CD8-positive, alpha-beta T cell (primary cell): ENCODE measurements at regions of chr12 and their contacts with region 1.

Region 1: GRCh38 chr12:47651368-47652254 is 54.2 kb downstream of the RPAP3 start:
- DNase-seq: peak in 7 of 9 experiments; percentile 29 to 73 (median 42)
- ATAC-seq: peak; percentile 96
- H3K4me3 ChIP-seq: no peak overlapping the region
- H3K4me3 Mint-ChIP-seq: peak overlapping the region; percentile 64
- H3K27ac ChIP-seq: no peak overlapping the region
- H3K27ac Mint-ChIP-seq: peak overlapping the region; percentile 19
- H3K4me1 ChIP-seq: peaks cover 9% of the 10 kb centered on the region
- H3K4me1 Mint-ChIP-seq: peaks cover 16% of the 10 kb centered on the region
- H3K27me3 ChIP-seq: no peaks in the 10 kb centered on the region
- H3K27me3 Mint-ChIP-seq: no peaks in the 10 kb centered on the region
- CTCF ChIP-seq: peak; percentile 90

Region 2: DNA sequence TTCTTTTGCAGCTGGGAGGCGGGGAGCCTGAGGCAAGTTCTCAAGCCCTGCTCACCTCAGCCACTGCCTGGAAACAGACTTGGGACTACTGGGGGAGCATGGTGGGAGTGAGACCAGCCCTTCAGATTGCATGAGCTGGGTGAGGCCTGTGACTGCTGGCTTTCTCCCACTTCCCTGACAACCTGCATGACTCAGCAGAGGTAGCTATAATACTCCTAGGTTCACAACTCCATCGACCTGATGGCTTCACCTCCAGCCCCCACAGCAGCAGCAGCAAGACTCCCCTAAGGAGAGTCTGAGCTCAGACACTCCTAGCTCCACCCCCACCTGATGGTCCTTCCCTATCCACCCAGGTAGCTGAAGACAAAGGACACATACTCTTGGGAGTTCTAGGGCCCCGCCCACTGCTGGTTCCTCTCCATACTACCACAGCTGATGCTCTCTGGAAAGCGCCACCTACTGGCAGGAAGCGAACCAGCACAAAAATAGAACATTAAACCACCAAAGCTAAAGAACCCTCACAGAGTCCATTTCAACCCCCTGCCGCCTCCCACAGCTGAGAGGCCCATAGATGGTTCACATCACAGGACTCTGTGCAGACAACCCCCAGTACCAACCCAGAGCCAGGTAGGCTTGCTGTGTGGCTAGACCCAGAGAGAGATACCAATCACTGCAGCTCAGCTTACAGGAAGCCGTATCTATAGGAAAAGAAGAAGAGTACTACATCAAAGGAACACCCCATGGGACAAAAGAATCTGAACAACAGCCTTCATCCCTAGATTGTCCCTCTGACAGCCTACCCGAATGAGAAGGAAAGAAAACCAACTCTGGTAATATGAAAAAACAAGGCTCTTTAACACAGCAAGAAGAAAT is 14.5 kb before region 1 on chr12:
- CTCF ChIA-PET with region 1: interaction called, 12 read pairs
- POLR2A ChIA-PET with region 1: no interaction called
- intact Hi-C with region 1: no loop called
- DNase-seq: peak in 6 of 9 experiments; percentile 13 to 54 (median 34)
- ATAC-seq: no peak
- H3K4me3 ChIP-seq: no peak overlapping the region
- H3K4me3 Mint-ChIP-seq: no peak overlapping the region
- H3K27ac ChIP-seq: no peak overlapping the region
- H3K27ac Mint-ChIP-seq: no peak overlapping the region
- H3K4me1 ChIP-seq: no peaks in the 10 kb centered on the region
- H3K4me1 Mint-ChIP-seq: no peaks in the 10 kb centered on the region
- H3K27me3 ChIP-seq: no peaks in the 10 kb centered on the region
- H3K27me3 Mint-ChIP-seq: no peaks in the 10 kb centered on the region
- CTCF ChIP-seq: no peak

Region 3: DNA sequence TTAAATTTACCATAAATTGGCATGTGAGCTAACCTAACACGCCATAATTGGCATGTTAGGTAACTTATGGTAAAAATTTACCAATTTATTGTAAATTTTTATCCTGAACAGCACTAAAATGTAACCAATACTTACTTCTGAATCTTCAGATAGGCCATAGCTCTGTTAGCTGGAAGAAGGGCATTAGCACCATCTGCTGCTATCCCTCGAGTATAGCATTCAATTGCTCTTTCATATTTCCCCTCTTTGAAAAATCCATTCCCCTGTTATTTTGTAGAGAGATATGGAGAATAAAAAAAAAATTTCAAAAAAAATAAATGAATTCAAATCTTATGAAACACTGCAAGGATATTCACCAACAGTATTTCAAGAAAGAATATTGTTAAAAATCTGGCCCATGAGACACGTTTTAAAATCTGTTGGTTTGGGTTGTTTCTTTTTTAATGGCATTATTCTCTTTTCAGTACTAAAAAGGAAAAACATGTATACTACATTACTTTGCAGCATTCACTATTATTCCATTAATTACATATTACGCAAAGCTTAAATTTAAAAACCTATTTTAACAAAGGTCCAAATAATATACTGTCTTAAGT is 35.1 kb after region 1 on chr12:
- CTCF ChIA-PET with region 1: interaction called, 3 read pairs
- POLR2A ChIA-PET with region 1: no interaction called
- intact Hi-C with region 1: loop called (anchors 1 to 5 kb)
- DNase-seq: peak in 3 of 9 experiments; percentile 21 to 61 (median 42)
- ATAC-seq: peak; percentile 66
- H3K4me3 ChIP-seq: no peak overlapping the region
- H3K4me3 Mint-ChIP-seq: no peak overlapping the region
- H3K27ac ChIP-seq: no peak overlapping the region
- H3K27ac Mint-ChIP-seq: no peak overlapping the region
- H3K4me1 ChIP-seq: no peaks in the 10 kb centered on the region
- H3K4me1 Mint-ChIP-seq: peaks cover 16% of the 10 kb centered on the region
- H3K27me3 ChIP-seq: no peaks in the 10 kb centered on the region
- H3K27me3 Mint-ChIP-seq: no peaks in the 10 kb centered on the region
- CTCF ChIP-seq: peak; percentile 76

Region 4: DNA sequence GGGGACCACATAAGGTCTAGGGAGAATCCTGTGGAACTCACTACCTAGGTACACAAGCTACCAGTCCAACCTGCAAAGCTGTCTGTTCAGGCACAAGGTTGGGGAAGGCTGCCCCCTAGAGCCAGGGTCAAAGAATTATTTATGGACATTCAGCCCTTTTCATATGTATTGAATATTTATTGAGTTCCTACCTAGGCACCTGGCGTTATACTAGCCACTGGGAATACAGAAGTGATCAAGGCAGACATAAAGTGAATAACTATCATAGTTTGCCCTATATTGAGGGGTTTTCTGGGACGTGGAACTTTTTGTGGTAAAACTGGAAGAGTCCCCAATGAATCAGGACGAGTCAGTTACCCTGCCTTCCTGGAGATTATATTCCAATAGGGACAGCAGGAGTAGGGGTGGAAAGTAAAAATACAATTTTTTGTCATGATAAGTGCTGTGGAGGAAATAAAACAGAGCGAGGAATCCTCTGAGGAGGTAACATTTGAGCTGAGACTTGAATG is 115.7 kb after region 1 on chr12:
- CTCF ChIA-PET with region 1: interaction called, 4 read pairs
- POLR2A ChIA-PET with region 1: no interaction called
- intact Hi-C with region 1: loop called in 1 of 2 experiments (anchors 5 kb)
- DNase-seq: peak; percentile 46 to 83 (median 73)
- ATAC-seq: peak; percentile 76
- H3K4me3 ChIP-seq: no peak overlapping the region
- H3K4me3 Mint-ChIP-seq: no peak overlapping the region
- H3K27ac ChIP-seq: no peak overlapping the region
- H3K27ac Mint-ChIP-seq: no peak overlapping the region
- H3K4me1 ChIP-seq: peaks cover 28% of the 10 kb centered on the region
- H3K4me1 Mint-ChIP-seq: peaks cover 23% of the 10 kb centered on the region
- H3K27me3 ChIP-seq: no peaks in the 10 kb centered on the region
- H3K27me3 Mint-ChIP-seq: no peaks in the 10 kb centered on the region
- CTCF ChIP-seq: peak; percentile 58